Tibial artery (tissue), 4 donors: ENCODE measurements at regions of chr14 and their contacts with region 1.

Region 1: GRCh38 chr14:55715889-55716288 is 135.9 kb downstream of the KTN1 start:
- DNase-seq: peak; percentile 78 to 81
- H3K4me3 ChIP-seq: no peak overlapping the region
- H3K27ac ChIP-seq: no peak overlapping the region
- H3K4me1 ChIP-seq: peaks cover 0 to 10% (median under 1%) of the 10 kb centered on the region in 4 donors
- H3K27me3 ChIP-seq: no peaks in the 10 kb centered on the region
- CTCF ChIP-seq: no peak

Region 2: GRCh38 chr14:55579724-55580469 is 136.0 kb before region 1 on chr14 and contains the start of gene KTN1:
- intact Hi-C with region 1: no loop called
- DNase-seq: peak; percentile 77 to 90
- H3K4me3 ChIP-seq: peak within 1 kb of the TSS; percentile 86 to 93
- H3K27ac ChIP-seq: peak within 1 kb of the TSS; percentile 97 to 98
- H3K4me1 ChIP-seq: peaks cover 0 to 42% (median 25%) of the 10 kb centered on the region in 4 donors
- H3K27me3 ChIP-seq: no peaks in the 10 kb centered on the region
- CTCF ChIP-seq: no peak

Region 3: DNA sequence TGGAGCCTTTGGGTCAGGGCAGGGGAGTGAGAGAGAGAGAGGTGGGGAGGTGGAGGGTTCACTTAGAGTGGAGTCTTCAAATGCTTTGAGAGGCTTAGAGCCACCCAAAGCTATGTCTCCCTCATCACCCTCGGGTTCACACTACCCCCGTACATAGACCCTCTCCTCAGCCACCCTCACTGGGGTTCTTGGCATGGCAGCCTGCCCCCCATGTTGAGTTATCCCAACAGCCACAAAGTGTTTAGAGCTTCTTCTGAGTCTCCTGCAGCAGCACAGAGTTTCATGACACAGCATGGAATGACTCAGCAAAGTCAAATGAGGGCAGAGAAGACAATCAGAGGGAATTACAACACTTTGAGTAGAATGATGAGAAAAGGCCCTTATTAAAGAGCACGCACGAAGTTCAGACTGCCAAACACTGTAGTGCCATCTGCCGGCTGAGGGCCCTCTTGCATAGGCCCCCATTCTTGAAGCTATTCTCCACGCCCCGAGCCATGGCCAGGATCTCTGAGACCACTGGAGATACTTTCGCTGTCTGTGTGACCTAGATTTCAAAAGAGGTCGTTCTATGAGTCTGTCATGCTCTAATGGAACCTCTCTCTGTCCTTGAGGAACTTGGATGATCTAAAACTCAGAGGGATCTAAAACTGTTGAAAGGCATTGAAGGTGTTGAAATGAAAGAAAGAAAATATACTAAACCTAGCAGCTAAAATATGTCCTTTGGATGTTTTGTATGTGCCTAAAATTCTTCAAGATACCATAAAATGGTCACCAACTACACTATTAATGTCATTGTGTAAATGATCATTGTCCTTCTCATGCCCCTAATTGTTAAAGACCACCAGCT is 624.2 kb after region 1 on chr14:
- intact Hi-C with region 1: loop called (anchors 10 kb)
- DNase-seq: peak; percentile 85
- H3K4me3 ChIP-seq: no peak overlapping the region
- H3K27ac ChIP-seq: peak overlapping the region; percentile 70 to 79
- H3K4me1 ChIP-seq: peaks cover 0 to 49% (median 34%) of the 10 kb centered on the region in 4 donors
- H3K27me3 ChIP-seq: no peaks in the 10 kb centered on the region
- CTCF ChIP-seq: peak; percentile 80 to 82